Esophagus muscularis mucosa (tissue), 4 donors: ENCODE measurements at regions of chr9 and their contacts with region 1.

Region 1: GRCh38 chr9:24498632-24499031 is 47.1 kb downstream of the IZUMO3 start:
- DNase-seq: no peak
- H3K4me3 ChIP-seq: no peak overlapping the region
- H3K27ac ChIP-seq: no peak overlapping the region
- H3K4me1 ChIP-seq: peaks cover 0 to 5% (median 0%) of the 10 kb centered on the region in 4 donors
- H3K27me3 ChIP-seq: no peaks in the 10 kb centered on the region
- CTCF ChIP-seq: no peak
- EP300 ChIP-seq: no peak
- POLR2A ChIP-seq: no peak

Region 2: GRCh38 chr9:24545285-24545684 is 46.7 kb after region 1 on chr9:
- intact Hi-C with region 1: loop called (anchors 5 kb)
- DNase-seq: no peak
- H3K4me3 ChIP-seq: no peak overlapping the region
- H3K27ac ChIP-seq: no peak overlapping the region
- H3K4me1 ChIP-seq: peaks cover 0 to 4% (median 0%) of the 10 kb centered on the region in 4 donors
- H3K27me3 ChIP-seq: no peaks in the 10 kb centered on the region
- CTCF ChIP-seq: no peak
- EP300 ChIP-seq: no peak
- POLR2A ChIP-seq: no peak